ENCODE measurements at regions of chr19 and their contacts with region 1.

Region 1: GRCh38 chr19:40348125-40348913 is at the starts of genes C19orf47 and PLD3:
- DNase-seq: peak; percentile 98 to 99 (median 99)
- H3K4me3 ChIP-seq: peak within 1 kb of the TSS; percentile 82
- H3K4me3 Mint-ChIP-seq: peak within 1 kb of the TSS; percentile 86 to 94 (median 90)
- H3K27ac ChIP-seq: peak within 1 kb of the TSS; percentile 79
- H3K27ac Mint-ChIP-seq: peak within 1 kb of the TSS; percentile 89 to 97 (median 94)
- H3K4me1 ChIP-seq: peaks cover 18% of the 10 kb centered on the region
- H3K4me1 Mint-ChIP-seq: peaks cover 28 to 52% (median 37%) of the 10 kb centered on the region in 3 donors
- H3K27me3 ChIP-seq: no peaks in the 10 kb centered on the region
- H3K27me3 Mint-ChIP-seq: peaks cover 0 to 3% of the 10 kb centered on the region in 2 donors
- total RNA-seq, gene C19orf47: 25.4 to 29.5 TPM
- total RNA-seq, gene PLD3: 48.2 to 53.0 TPM

Region 2: DNA sequence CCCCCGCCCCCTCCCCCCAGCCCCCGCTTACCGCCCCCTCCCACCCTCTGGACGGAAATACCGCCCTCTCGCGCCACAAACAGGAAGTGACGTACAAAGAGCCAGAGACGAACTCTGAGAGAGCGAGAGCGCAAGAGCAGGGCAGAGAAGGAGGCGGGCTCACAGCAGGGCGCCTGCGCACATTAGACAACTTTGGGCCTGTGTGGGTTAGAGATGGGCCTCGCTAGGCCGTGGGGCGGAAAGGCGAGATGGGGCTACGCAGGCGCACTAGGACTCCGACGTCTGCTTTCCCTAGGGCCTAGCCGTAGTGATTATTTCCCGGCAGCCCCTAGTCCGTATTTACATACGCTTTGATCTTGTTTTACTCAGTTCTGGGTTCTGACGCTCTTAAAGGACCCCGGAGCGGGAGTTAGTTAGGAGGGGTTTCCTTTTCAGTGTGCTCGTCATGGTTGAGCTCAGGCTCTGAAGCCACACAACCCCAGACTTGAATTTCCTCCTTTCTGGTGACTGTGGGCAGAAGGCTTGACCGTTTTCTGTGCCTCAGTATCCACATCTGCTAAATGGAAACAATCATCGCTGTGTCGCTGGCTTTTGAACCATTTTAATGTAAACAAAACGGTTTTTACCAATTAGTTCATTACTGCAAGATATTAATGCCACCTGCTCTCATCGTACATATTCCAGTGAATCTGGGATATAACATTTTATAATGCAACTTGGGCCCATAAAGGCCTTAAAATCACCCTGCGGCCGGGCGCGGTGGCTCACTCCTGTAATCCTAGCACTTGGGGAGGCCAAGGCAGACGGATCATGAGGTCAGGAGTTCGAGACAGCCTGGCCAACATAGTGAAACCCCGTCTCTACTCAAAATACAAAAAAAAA is 62.7 kb before region 1 on chr19:
- CTCF ChIA-PET with region 1: no interaction called
- POLR2A ChIA-PET with region 1: interaction called, 10 read pairs
- DNase-seq: peak; percentile 96 to 100 (median 99)
- H3K4me3 ChIP-seq: peak overlapping the region; percentile 85
- H3K4me3 Mint-ChIP-seq: peak overlapping the region; percentile 80 to 97 (median 92)
- H3K27ac ChIP-seq: peak overlapping the region; percentile 94
- H3K27ac Mint-ChIP-seq: peak overlapping the region; percentile 92 to 100 (median 99)
- H3K4me1 ChIP-seq: peaks cover 43% of the 10 kb centered on the region
- H3K4me1 Mint-ChIP-seq: peaks cover 41 to 54% (median 49%) of the 10 kb centered on the region in 3 donors
- H3K27me3 ChIP-seq: no peaks in the 10 kb centered on the region
- H3K27me3 Mint-ChIP-seq: peaks cover 0 to 2% of the 10 kb centered on the region in 2 donors